Panc1 (cell line): ENCODE measurements at regions of chr6 and their contacts with region 1.

Region 1: DNA sequence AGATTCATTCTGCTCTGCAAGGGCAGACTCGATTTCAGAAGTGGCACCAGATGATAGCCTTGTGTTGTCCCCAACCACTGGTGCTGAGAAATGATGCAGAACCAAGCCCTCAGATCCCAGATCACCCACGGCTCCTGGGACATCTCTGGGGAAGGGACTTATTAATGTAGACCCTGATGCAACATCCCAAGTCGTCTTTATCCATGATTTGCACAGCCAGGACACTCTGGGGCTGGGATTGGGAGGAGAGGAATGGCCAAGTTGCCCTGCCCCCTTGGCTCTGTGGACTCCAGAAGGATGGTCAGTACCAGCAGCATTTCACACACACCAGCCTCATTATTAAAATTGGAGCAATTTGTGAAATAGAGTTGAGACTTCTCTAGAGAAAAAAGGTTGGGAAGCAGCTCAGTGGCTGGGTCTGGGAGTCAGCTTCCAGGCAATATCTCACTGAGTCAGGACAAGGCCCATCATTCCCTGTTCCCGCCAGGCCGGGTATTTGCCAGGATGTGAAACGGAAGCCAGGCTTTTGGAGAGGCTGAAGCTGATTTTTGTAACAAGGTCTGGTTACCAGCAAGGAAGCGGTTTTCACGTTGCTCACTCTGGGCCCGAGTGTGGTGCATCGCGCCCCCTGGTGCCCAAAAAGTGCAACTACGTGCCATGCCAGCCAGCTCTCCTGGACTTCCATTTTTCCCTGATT is 67.4 kb downstream of the ZBTB2 start:
- DNase-seq: peak; percentile 76
- ATAC-seq: peak; percentile 81
- H3K4me3 ChIP-seq: peak overlapping the region in 1 of 2 experiments; percentile 17; a peak in 1 of 4 replicates
- H3K27ac ChIP-seq: peak overlapping the region; percentile 85
- H3K4me1 ChIP-seq: peaks cover 25% of the 10 kb centered on the region
- H3K27me3 ChIP-seq: no peaks in the 10 kb centered on the region
- CTCF ChIP-seq: peak; percentile 96

Region 2: DNA sequence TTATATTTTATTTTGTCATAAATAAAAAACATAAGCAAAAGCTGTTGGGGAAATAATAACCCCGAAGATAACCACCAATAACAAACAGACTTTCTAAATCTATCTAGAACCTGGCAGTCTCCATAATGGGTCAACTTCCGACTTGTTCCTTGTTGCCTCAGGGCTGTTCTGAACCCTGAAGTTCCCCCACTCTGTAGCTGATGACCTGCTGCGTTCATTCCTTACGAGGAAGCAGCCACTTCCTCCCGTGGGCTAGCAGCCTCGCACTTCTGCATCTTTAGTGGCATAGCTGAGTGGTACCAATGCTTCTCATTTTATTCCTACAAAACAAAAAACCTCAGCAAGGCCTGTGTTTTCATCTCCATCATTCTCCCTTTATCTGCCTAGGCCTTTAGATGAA is 621.3 kb before region 1 on chr6:
- CTCF ChIA-PET with region 1: interaction called, 11 read pairs
- POLR2A ChIA-PET with region 1: no interaction called
- in situ Hi-C with region 1: no loop called
- intact Hi-C with region 1: no loop called
- DNase-seq: no peak
- ATAC-seq: no peak
- H3K4me3 ChIP-seq: no peak overlapping the region
- H3K27ac ChIP-seq: no peak overlapping the region
- H3K4me1 ChIP-seq: no peaks in the 10 kb centered on the region
- H3K27me3 ChIP-seq: no peaks in the 10 kb centered on the region; the same call in 1 of the 2 replicates
- CTCF ChIP-seq: no peak

Region 3: DNA sequence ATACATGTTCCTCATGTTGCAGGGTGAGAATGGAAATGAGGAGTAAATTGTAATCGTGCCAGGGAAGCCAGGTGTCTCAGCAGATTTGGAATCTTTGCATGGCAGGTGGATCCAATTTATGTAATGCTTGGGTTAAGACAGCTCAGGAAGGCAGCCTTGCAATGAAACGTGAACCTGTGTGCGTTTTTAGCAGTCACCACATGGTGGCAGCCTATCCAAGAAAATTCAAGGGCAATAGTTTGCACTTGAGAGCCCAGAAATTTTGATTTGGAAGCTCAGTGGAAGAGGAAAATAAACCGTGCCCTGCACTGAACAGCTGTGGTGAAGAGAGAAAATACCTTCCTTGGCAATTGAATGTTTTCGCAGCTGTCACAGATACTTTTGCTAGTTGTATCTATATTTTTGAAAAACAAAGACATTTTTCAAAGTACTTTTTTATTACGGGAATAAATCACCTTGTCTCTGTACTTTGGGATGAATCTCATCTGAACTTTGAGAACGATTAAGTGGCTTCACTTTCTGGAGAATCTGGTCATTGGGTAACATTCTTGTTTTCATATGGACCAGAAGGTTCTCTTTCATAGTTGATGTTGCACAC is 432.0 kb before region 1 on chr6:
- CTCF ChIA-PET with region 1: interaction called, 14 read pairs
- POLR2A ChIA-PET with region 1: no interaction called
- in situ Hi-C with region 1: no loop called
- intact Hi-C with region 1: no loop called
- DNase-seq: peak; percentile 74
- ATAC-seq: peak; percentile 85
- H3K4me3 ChIP-seq: no peak overlapping the region
- H3K27ac ChIP-seq: no peak overlapping the region
- H3K4me1 ChIP-seq: no peaks in the 10 kb centered on the region; the same call in 1 of the 2 replicates
- H3K27me3 ChIP-seq: no peaks in the 10 kb centered on the region
- CTCF ChIP-seq: peak; percentile 89

Region 4: GRCh38 chr6:151014404-151015100 is 309.4 kb before region 1 on chr6:
- CTCF ChIA-PET with region 1: interaction called, 39 read pairs
- POLR2A ChIA-PET with region 1: interaction called, 6 read pairs
- in situ Hi-C with region 1: no loop called
- intact Hi-C with region 1: loop called (anchors 1 kb)
- DNase-seq: peak; percentile 65
- ATAC-seq: peak; percentile 86
- H3K4me3 ChIP-seq: no peak overlapping the region
- H3K27ac ChIP-seq: peak overlapping the region; percentile 79
- H3K4me1 ChIP-seq: peaks cover 20% of the 10 kb centered on the region
- H3K27me3 ChIP-seq: no peaks in the 10 kb centered on the region
- CTCF ChIP-seq: peak; percentile 98

Region 5: DNA sequence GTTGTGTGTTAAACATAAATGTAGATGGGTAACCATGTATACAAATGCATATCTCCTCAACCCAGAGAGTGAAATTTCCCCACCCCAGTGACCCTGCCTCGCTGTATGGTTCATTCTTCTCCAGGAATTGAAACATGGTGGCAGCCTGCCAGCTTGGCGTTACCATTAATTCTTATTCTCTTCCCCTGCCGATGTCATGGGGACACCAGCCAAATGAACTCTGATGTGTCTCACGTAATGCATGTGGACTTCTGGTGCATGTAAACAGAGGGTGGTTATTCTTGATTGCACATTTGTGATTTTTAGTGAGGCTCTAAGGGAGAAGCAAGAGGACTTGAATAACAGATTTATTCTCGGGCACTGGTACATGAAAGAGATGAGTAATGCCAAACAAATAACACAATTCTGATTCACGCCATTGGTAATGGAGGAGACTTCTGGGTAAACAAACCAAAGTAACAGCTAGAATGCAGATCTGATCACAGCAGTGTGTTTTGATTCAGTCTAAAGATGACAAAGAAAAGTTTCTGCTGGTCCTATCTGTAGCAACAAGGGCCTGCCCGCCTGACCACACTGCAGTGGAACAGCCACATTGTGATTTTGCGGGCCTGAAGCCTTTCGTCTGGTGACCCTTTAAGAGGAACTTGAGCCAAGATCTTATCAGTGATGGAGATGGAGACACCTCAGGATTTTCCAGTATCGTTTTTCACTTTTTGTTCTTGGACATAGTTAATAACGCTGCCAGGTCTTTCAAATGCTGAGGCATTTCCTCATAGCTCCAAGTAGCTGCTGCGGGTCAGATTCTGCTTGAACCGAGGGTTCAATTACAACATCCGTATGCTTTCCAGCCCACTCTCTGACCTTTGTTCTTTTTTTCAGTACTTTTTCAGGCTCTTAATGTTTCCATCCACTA is 256.0 kb before region 1 on chr6:
- CTCF ChIA-PET with region 1: interaction called, 6 read pairs
- POLR2A ChIA-PET with region 1: interaction called, 6 read pairs
- in situ Hi-C with region 1: no loop called
- intact Hi-C with region 1: loop called (anchors 10 kb)
- DNase-seq: peak; percentile 97
- ATAC-seq: peak; percentile 93
- H3K4me3 ChIP-seq: peak overlapping the region in 1 of 2 experiments; percentile 37; a peak in 2 of 4 replicates
- H3K27ac ChIP-seq: peak overlapping the region; percentile 98
- H3K4me1 ChIP-seq: peaks cover 59% of the 10 kb centered on the region
- H3K27me3 ChIP-seq: no peaks in the 10 kb centered on the region
- CTCF ChIP-seq: no peak